ENCODE measurements at regions of chr22 and their contacts with region 1.

Region 1: GRCh38 chr22:38412435-38413084 is 42.4 kb downstream of the KCNJ4 start:
- DNase-seq: peak in 1 of 5 donors; percentile 12
- ATAC-seq: peak in 3 of 4 donors; percentile 15 to 38 (median 28)
- H3K4me3 ChIP-seq: peak overlapping the region in 11 of 12 donors; percentile 14 to 48 (median 32)
- H3K27ac ChIP-seq: peak overlapping the region in 8 of 12 donors; percentile 57 to 89 (median 70)
- H3K4me1 ChIP-seq: peaks cover 0 to 32% (median 14%) of the 10 kb centered on the region in 12 donors
- H3K27me3 ChIP-seq: no peaks in the 10 kb centered on the region
- CTCF ChIP-seq: peak; percentile 61 to 89 (median 80)
- POLR2A ChIP-seq: no peak

Region 2: DNA sequence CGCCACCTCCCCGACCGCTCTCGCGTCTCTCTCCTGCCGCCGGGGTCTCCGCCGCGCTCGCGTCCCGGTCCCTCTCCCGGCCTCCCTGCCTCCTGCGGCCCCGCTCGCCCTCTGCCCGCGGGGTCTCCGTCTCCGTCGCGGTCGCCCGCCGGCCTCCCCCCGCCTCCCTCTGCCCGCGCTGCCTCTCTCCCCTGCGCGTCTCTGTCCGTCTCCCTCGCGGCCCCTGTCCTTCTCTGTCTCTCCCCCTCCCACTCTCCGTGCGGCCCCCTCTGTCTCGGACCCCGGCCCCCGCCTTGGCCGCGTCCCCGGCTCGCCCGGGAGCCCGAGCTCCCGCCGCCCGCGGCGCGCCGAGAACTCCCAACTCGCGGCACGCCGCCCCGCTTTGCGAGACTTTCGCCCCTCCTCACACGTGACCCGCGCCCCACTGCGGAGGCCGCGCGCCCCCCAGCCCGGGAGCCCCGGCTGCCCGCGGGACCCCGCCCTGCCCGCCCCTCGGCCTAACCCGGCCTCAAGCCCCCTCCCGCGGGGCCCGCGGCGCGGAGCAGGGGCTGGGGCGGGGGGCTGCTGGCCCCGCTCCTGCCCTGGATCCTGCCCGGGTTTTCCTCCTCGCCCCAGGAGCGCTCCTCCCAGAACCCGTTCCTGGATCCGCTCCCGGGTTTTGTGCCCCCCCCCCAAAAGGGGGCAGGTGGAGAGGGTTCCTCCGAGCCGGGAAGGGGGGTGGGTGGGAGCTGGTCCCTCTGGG is 43.1 kb after region 1 on chr22:
- intact Hi-C with region 1: loop called in 6 of 10 experiments (anchors 2 to 5 kb)
- DNase-seq: peak in 3 of 5 donors; percentile 57 to 63 (median 61)
- ATAC-seq: peak in 1 of 4 donors; percentile 2
- H3K4me3 ChIP-seq: peak overlapping the region; percentile 29 to 84 (median 59)
- H3K27ac ChIP-seq: peak overlapping the region; percentile 52 to 99 (median 80)
- H3K4me1 ChIP-seq: peaks cover 0 to 68% (median 7%) of the 10 kb centered on the region in 12 donors
- H3K27me3 ChIP-seq: peaks cover 0 to 81% (median 26%) of the 10 kb centered on the region in 9 donors
- CTCF ChIP-seq: no peak
- POLR2A ChIP-seq: peak in 1 of 2 donors; percentile 19

Region 3: DNA sequence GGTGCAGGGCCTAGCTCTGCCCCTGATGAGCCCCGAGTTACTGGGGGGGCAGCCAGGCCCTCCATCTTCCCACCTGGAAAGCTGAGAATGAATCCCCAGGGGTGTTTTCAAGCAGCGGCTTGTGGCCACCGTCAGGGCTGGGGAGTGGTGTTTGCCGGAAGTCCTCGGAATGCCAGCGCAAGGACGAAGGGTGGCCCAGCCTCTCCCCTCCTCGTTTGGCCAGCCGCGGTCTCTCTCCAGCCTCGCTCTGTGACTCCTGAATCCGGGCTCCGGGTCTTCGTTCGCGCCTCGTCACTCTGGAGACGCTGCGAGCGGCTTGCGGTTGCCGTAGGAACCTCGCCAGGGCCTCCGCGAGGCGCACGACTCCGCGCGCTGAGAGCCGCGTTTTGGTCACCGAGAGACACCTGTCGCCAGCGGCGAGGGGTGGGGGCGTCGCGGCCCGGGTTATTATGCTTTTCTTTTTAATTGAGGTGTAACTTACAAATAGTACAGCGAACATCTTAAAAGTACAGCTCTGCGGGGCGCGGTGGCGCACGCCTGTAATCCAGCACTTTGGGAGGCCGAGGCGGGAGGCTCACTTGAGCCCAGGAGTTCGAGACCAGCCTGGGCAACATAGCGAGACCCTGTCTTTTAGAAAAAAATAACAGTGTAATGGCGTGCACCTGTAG is 49.0 kb after region 1 on chr22:
- intact Hi-C with region 1: loop called in 3 of 10 experiments (anchors 2 to 5 kb)
- DNase-seq: peak; percentile 86 to 91 (median 88)
- ATAC-seq: peak; percentile 54 to 81 (median 76)
- H3K4me3 ChIP-seq: peak overlapping the region in 10 of 12 donors; percentile 9 to 43 (median 30)
- H3K27ac ChIP-seq: peak overlapping the region in 9 of 12 donors; percentile 11 to 82 (median 71)
- H3K4me1 ChIP-seq: peaks cover 0 to 50% (median 20%) of the 10 kb centered on the region in 12 donors
- H3K27me3 ChIP-seq: peaks cover 0 to 70% (median 5%) of the 10 kb centered on the region in 9 donors
- CTCF ChIP-seq: peak in 2 of 12 donors; percentile 3 to 5
- POLR2A ChIP-seq: no peak

Region 4: GRCh38 chr22:38601221-38601764 is 188.7 kb after region 1 on chr22:
- intact Hi-C with region 1: no loop called
- DNase-seq: no peak
- ATAC-seq: no peak
- H3K4me3 ChIP-seq: no peak overlapping the region
- H3K27ac ChIP-seq: no peak overlapping the region
- H3K4me1 ChIP-seq: peaks cover 0 to 5% (median 0%) of the 10 kb centered on the region in 12 donors
- H3K27me3 ChIP-seq: no peaks in the 10 kb centered on the region
- CTCF ChIP-seq: no peak
- POLR2A ChIP-seq: no peak

Measured in heart left ventricle (tissue), 16 donors.